ENCODE measurements at regions of chr1 and their contacts with region 1.

Region 1: DNA sequence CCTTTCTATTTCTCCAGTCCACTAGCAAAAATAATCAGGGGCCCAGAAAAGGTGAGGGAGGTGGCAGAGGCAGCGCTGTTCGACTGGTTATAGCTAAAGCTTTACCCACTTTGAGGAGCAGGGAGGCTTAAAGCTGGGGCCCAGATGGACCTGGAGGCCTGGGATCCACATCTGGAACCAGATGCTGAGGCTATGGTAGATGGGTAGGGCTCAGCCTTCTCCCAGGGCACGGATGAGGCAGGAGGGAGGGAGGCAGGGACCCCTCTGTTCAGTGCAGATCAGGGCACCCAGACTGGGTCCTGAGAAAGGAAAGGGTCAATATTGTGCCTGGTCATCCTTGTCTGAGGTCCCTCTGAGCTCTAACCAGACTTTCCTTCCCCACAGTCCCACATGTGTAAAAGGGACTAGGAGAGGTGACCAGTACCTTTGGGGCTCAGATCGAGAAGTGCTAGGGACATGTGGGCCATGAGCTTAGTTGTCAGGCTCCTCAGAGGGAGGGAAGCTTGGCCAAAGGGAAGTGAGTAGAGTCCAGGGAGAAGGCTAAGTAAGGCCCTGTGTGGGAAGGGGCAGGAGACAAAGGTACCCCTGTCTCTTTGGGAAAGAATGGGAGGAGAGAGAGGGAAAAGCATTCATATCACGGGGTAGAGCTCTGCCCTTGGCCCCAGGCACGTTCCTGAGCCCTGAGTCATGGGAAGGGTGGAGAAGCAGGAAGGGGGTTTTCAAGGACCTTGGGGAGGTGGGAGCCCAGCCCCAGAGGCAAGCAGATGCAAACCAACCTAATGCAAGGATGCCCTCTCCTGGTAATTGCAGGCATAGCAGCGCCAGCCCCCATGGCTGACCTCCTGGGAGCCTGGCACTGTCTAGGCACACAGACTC is 15.4 kb downstream of the LMNA start:
- DNase-seq: peak; percentile 99
- H3K4me3 Mint-ChIP-seq: peak overlapping the region; percentile 60
- H3K27ac Mint-ChIP-seq: peak overlapping the region; percentile 96
- H3K4me1 Mint-ChIP-seq: peaks cover 50% of the 10 kb centered on the region
- H3K27me3 Mint-ChIP-seq: no peaks in the 10 kb centered on the region
- CTCF ChIP-seq: peak; percentile 100

Region 2: GRCh38 chr1:155794605-155795245 is 335.2 kb before region 1 on chr1:
- CTCF ChIA-PET with region 1: no interaction called
- POLR2A ChIA-PET with region 1: no interaction called
- intact Hi-C with region 1: no loop called
- DNase-seq: no peak
- H3K4me3 Mint-ChIP-seq: no peak overlapping the region
- H3K27ac Mint-ChIP-seq: no peak overlapping the region
- H3K4me1 Mint-ChIP-seq: no peaks in the 10 kb centered on the region
- H3K27me3 Mint-ChIP-seq: no peaks in the 10 kb centered on the region
- CTCF ChIP-seq: no peak

Region 3: GRCh38 chr1:156001682-156002171 is 128.2 kb before region 1 on chr1:
- CTCF ChIA-PET with region 1: interaction called, 3 read pairs
- POLR2A ChIA-PET with region 1: no interaction called
- intact Hi-C with region 1: loop called (anchors 1 kb)
- DNase-seq: no peak
- H3K4me3 Mint-ChIP-seq: peak overlapping the region; percentile 74
- H3K27ac Mint-ChIP-seq: peak overlapping the region; percentile 94
- H3K4me1 Mint-ChIP-seq: peaks cover 38% of the 10 kb centered on the region
- H3K27me3 Mint-ChIP-seq: no peaks in the 10 kb centered on the region
- CTCF ChIP-seq: peak; percentile 14

Region 4: GRCh38 chr1:156096640-156097391 is 33.1 kb before region 1 on chr1:
- CTCF ChIA-PET with region 1: interaction called, 1,892 read pairs
- POLR2A ChIA-PET with region 1: interaction called, 960 read pairs
- intact Hi-C with region 1: loop called (anchors 1 kb)
- DNase-seq: peak; percentile 89
- H3K4me3 Mint-ChIP-seq: no peak overlapping the region
- H3K27ac Mint-ChIP-seq: peak overlapping the region; percentile 82
- H3K4me1 Mint-ChIP-seq: peaks cover 35% of the 10 kb centered on the region
- H3K27me3 Mint-ChIP-seq: no peaks in the 10 kb centered on the region
- CTCF ChIP-seq: peak; percentile 99

Region 5: GRCh38 chr1:156140879-156141252 is 10.9 kb after region 1 on chr1:
- CTCF ChIA-PET with region 1: interaction called, 126 read pairs
- POLR2A ChIA-PET with region 1: interaction called, 25 read pairs
- intact Hi-C with region 1: no loop called
- DNase-seq: no peak
- H3K4me3 Mint-ChIP-seq: no peak overlapping the region
- H3K27ac Mint-ChIP-seq: no peak overlapping the region
- H3K4me1 Mint-ChIP-seq: peaks cover 24% of the 10 kb centered on the region
- H3K27me3 Mint-ChIP-seq: no peaks in the 10 kb centered on the region
- CTCF ChIP-seq: no peak

Region 6: GRCh38 chr1:156212833-156213643 is 83.1 kb after region 1 on chr1 and contains the start of gene PMF1:
- CTCF ChIA-PET with region 1: interaction called, 18 read pairs
- POLR2A ChIA-PET with region 1: interaction called, 57 read pairs
- intact Hi-C with region 1: no loop called
- DNase-seq: peak; percentile 99
- H3K4me3 Mint-ChIP-seq: peak within 1 kb of the TSS; percentile 97
- H3K27ac Mint-ChIP-seq: peak within 1 kb of the TSS; percentile 96
- H3K4me1 Mint-ChIP-seq: peaks cover 21% of the 10 kb centered on the region
- H3K27me3 Mint-ChIP-seq: no peaks in the 10 kb centered on the region
- CTCF ChIP-seq: no peak
- total RNA-seq, gene PMF1: 51.0 and 77.7 TPM in 2 replicates

Region 7: DNA sequence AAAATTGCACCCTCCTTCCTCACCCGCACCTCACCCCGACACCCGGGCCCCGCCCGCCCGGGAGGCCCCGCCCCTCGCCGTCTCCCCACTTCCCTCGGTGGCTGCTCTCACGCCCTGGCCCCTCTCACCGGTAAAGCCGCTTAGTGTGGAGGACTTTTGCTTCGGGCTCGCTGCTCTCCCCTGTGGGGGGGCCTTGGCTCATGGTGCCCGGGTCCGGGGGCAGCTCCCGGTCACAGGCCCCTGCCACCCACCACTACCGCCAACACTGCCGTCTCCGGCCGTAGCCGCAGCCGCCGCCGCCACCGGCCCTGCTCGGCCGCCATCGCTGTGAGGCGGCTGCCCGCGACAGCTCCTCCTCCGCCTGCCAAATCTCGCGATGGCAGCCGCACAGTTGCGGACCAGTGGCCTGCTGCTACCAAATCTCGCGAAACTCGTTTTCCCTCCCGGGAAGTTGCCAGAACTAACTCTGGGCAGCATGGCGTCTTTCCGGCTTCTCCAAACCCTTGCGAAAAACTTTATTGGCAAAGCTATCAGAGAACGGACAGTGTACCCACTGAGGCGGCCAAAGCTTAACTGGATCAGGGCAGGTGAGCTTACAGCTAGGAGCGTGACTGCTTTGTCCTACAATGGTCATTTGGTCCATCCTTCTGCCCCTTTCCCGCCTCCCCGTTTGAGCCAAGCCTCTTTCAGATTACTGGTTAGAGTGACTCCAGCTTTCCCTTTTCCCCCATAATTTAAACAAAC is 152.7 kb after region 1 on chr1 and contains the start of gene SMG5:
- CTCF ChIA-PET with region 1: interaction called, 10 read pairs
- POLR2A ChIA-PET with region 1: interaction called, 31 read pairs
- intact Hi-C with region 1: no loop called
- DNase-seq: peak; percentile 100
- H3K4me3 Mint-ChIP-seq: peak within 1 kb of the TSS; percentile 92
- H3K27ac Mint-ChIP-seq: peak within 1 kb of the TSS; percentile 93
- H3K4me1 Mint-ChIP-seq: peaks cover 38% of the 10 kb centered on the region
- H3K27me3 Mint-ChIP-seq: no peaks in the 10 kb centered on the region
- CTCF ChIP-seq: no peak
- total RNA-seq, gene SMG5: 118 and 140 TPM in 2 replicates

Measured in MCF 10A (cell line).